ENCODE measurements at regions of chr17 and their contacts with region 1.

Region 1: GRCh38 chr17:47776330-47777197 is 43.5 kb downstream of the TBX21 start:
- DNase-seq: no peak
- ATAC-seq: no peak

Region 2: GRCh38 chr17:46995841-46996571 is 780.6 kb before region 1 on chr17:
- intact Hi-C with region 1: loop called (anchors 10 kb)
- DNase-seq: no peak
- ATAC-seq: no peak

Region 3: GRCh38 chr17:47733047-47733673 is 43.4 kb before region 1 on chr17 and contains the start of gene TBX21:
- intact Hi-C with region 1: no loop called
- DNase-seq: no peak
- ATAC-seq: peak; percentile 70
- total RNA-seq, gene TBX21: 1.1 TPM

Region 4: DNA sequence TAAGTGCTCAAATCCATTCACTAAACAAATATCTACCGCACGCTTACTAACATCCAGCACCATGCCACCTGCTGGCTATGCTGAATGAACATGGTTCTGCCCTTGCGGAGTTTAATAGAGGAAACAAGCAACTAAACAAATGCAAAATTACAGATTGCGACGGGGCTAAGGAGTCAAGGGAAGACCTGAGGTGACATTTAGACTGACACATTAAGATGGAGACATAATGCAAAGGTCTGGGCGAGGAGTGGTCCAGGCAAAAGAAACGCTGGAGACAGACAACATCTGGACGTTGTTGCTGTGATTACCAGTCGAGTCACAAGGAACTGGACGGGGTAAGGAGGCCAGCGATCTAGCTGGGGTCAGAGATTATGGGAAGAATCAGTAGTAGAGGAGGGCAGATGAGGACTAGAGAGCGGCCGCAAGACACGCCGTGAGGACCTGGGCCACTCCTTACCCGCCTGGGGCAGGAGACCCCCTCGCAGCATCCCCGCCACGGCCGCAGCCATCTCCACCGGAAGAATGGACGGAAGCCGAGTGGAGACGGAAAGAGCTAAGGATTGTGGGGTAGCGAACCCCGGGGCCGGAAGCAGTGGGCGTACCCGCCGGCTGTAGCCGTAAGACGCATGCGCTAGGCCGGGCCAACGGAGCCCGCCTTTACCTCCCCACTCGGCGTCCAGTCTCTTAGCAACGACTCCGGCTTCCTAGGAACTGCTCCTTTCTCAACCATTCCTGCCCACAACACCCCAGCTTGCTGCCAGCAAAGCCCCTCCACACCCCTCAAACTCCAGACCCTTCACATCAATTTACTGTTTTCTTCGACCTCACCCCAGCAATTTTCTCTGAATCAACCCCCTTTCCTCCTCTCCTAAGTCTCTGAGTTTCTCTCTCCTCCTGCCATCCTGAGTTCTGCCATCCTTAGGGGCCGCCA is 54.7 kb after region 1 on chr17 and contains the starts of genes LRRC46 and MRPL10:
- intact Hi-C with region 1: no loop called
- DNase-seq: peak; percentile 96
- ATAC-seq: peak; percentile 99
- total RNA-seq, gene LRRC46: 0.89 TPM
- total RNA-seq, gene MRPL10: 26.6 TPM

Measured in sciatic nerve (tissue), 2 donors.